ENCODE measurements at regions of chr13 and their contacts with region 1.

Region 1: DNA sequence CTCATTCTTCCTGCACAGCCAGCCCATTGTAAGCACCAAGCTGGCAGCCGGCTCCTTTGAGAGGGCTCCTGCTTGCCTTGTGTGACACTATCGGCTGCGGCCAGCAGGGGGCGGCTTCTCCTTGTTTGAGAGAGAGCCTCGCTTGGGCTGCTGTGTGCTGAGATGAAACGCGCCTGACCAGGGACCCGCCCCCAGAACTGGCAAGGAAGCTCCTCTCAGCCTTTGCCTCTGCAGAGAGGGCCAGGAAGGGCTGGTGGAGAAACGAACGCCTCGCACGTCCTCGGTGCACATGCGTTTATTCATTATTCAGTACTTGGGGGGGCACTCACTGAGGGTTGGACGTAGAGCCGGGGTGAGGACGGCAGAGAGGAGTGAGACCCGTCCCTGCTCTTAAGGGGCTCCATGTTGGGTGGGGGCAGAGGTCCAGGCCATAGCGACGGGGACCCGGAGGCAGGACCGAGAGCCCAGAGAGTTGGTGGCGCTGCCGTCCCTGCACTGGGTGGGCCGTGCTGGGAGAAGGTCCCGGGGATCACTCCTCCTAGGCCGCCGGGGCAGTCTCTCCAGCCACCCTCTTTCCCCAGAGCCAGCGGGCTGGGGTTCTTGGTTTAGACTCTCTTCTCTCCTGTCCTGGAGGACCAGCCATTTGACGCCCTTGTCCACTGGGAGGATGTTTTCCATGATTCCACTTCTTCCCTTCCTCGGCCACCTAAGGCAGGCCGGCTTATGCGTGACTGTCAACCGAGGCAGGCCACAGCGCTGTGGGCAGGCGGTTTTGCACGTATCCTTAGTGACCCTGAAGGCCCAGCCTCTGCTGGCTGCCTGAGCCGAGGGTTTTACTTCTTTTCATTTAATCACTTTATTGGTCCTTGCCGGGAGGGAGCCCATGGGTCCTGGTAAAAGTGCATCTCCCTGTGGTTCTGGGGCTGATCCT is 174.5 kb downstream of the KATNAL1 start:
- DNase-seq: peak; percentile 94 to 100 (median 99)

Region 2: GRCh38 chr13:30158774-30159445 is 26.0 kb after region 1 on chr13:
- intact Hi-C with region 1: no loop called
- DNase-seq: peak in 1 of 10 donors; percentile 61

Region 3: GRCh38 chr13:30334663-30335386 is 201.9 kb after region 1 on chr13:
- intact Hi-C with region 1: loop called (anchors 10 kb)
- DNase-seq: peak in 1 of 10 donors; percentile 31

Region 4: GRCh38 chr13:30617315-30618185 is 484.7 kb after region 1 on chr13 and contains the start of gene USPL1:
- intact Hi-C with region 1: loop called (anchors 5 kb)
- DNase-seq: peak; percentile 94 to 99 (median 98)

Region 5: GRCh38 chr13:30673669-30674521 is 541.0 kb after region 1 on chr13:
- intact Hi-C with region 1: loop called (anchors 10 kb)
- DNase-seq: peak; percentile 77 to 98 (median 86)

Region 6: GRCh38 chr13:30802953-30803478 is 670.1 kb after region 1 on chr13:
- intact Hi-C with region 1: loop called (anchors 5 kb)
- DNase-seq: peak; percentile 76 to 98 (median 88)

Region 7: GRCh38 chr13:30865123-30866049 is 732.5 kb after region 1 on chr13:
- intact Hi-C with region 1: loop called (anchors 10 kb)
- DNase-seq: peak; percentile 61 to 97 (median 80)

Region 8: GRCh38 chr13:31044377-31045285 is 911.7 kb after region 1 on chr13:
- intact Hi-C with region 1: loop called (anchors 5 kb)
- DNase-seq: peak; percentile 75 to 97 (median 82)